Activated T-helper 1 cell treated with anti-CD3 and anti-CD28 coated beads, Interleukin-12 subunit alpha, Interleukin-12 subunit beta, Interleukin-2, Interleukin-4 antibody, amounts not matched to agents 30 ng/mL and 10 ng/mL and 1 ng/mL, durations not matched to agents 14 hours and 24 hours and 36 hours (primary cell): ENCODE measurements at regions of chrX and their contacts with region 1.

Region 1: GRCh38 chrX:1391707-1392375 is at the start of gene SLC25A6:
- DNase-seq: peak; percentile 100
- H3K4me3 Mint-ChIP-seq: peak within 1 kb of the TSS; percentile 93
- H3K27ac Mint-ChIP-seq: peak within 1 kb of the TSS; percentile 95
- H3K4me1 Mint-ChIP-seq: peaks cover 45% of the 10 kb centered on the region
- H3K27me3 Mint-ChIP-seq: no peaks in the 10 kb centered on the region
- total RNA-seq, gene SLC25A6: 281 and 289 TPM in 2 replicates

Region 2: GRCh38 chrX:386768-387575 is 1004.9 kb before region 1 on chrX and contains the start of gene PPP2R3B:
- intact Hi-C with region 1: loop called (anchors 10 kb)
- DNase-seq: peak; percentile 98
- H3K4me3 Mint-ChIP-seq: peak within 1 kb of the TSS; percentile 89
- H3K27ac Mint-ChIP-seq: peak within 1 kb of the TSS; percentile 99
- H3K4me1 Mint-ChIP-seq: peaks cover 9% of the 10 kb centered on the region
- H3K27me3 Mint-ChIP-seq: peaks cover 5% of the 10 kb centered on the region
- total RNA-seq, gene PPP2R3B: 43.2 and 44.1 TPM in 2 replicates

Region 3: DNA sequence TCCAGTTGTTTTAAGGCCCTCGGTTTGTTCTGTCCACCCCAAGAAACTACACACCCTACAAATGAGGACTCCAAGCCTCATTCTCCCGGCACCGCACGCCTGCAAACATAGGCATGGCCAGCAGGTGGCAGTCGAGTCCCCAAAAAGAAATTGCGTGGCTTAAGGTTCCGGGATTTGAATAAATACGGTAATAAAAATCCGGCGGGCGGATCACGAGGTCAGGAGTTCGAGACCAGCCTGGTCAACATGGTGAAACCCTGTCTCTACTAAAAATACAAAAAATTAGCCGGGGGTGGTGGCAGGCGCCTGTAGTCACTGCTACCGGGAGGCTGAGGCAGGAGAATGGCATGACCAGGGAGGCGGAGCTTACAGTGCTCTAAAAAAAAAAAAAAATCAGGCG is 145.0 kb before region 1 on chrX:
- intact Hi-C with region 1: loop called (anchors 2 kb)
- DNase-seq: peak; percentile 77
- H3K4me3 Mint-ChIP-seq: peak overlapping the region; percentile 64
- H3K27ac Mint-ChIP-seq: peak overlapping the region; percentile 78
- H3K4me1 Mint-ChIP-seq: peaks cover 42% of the 10 kb centered on the region
- H3K27me3 Mint-ChIP-seq: peaks cover 4% of the 10 kb centered on the region

Region 4: DNA sequence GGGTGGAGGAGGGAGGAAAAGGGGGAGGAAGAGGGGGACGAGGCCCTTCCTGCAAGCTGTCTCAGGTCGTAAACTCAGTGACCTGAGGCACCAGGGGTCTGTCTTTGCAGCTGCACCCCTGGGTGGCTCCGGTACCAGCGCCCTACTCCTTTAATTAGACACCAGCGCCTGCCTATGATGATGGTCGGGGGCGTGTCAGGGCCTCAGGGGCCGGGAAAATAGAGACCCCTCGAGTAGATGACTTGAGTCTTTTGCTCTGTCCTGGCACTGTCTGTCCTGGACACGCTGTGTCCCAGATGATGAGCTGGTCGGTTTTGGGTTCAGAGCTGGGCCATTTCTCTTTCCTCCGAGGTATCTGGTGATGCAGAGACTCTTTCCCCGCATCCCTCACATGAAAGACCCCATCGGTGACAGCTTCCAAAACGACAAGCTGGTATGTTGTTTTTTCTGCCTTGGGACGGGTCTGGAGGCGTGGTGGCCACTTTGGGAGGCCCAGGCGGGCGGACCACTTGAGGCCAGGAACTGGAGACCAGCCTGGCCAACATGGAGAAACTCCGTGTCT is 11.1 kb before region 1 on chrX:
- intact Hi-C with region 1: no loop called
- DNase-seq: no peak
- H3K4me3 Mint-ChIP-seq: no peak overlapping the region
- H3K27ac Mint-ChIP-seq: no peak overlapping the region
- H3K4me1 Mint-ChIP-seq: no peaks in the 10 kb centered on the region
- H3K27me3 Mint-ChIP-seq: peaks cover 1% of the 10 kb centered on the region

Region 5: DNA sequence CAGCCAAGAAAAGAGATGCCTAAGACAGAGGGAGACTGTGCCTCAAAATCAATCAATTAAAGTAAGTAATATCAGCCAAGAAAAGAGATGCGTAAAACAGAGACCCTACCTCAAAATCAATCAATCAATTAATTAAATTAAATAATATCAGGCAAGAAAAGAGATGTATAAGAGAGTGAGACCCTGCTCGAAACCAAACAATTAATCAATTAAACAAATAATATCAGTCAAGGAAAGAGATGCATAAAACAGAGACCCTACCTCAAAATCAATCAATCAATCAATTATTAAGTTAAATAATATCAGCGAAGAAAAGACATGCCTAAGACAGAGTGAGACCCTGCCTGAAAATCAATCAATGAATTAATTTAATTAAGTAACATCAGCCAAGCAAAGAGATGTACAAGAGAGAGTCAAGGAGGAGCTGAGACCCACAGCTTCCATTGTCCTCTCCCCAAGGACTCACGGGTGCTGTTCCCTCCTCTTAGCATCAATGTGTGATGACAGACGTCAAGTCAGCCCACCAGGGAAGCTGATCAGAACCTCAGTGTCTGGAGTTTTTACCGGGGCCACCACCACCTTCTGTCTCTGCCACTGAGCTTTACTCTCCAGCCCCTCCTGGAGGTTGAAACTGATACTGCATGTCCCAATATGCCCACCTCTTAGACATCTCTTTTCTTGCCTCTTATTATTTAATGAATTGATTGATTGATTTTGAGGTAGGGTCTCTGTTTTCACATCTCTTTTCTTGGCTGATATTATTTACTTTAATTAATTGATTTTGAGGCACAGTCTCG is 189.1 kb after region 1 on chrX:
- intact Hi-C with region 1: loop called (anchors 1 kb)
- DNase-seq: peak; percentile 66
- H3K4me3 Mint-ChIP-seq: no peak overlapping the region
- H3K27ac Mint-ChIP-seq: no peak overlapping the region
- H3K4me1 Mint-ChIP-seq: peaks cover 19% of the 10 kb centered on the region
- H3K27me3 Mint-ChIP-seq: no peaks in the 10 kb centered on the region

Region 6: DNA sequence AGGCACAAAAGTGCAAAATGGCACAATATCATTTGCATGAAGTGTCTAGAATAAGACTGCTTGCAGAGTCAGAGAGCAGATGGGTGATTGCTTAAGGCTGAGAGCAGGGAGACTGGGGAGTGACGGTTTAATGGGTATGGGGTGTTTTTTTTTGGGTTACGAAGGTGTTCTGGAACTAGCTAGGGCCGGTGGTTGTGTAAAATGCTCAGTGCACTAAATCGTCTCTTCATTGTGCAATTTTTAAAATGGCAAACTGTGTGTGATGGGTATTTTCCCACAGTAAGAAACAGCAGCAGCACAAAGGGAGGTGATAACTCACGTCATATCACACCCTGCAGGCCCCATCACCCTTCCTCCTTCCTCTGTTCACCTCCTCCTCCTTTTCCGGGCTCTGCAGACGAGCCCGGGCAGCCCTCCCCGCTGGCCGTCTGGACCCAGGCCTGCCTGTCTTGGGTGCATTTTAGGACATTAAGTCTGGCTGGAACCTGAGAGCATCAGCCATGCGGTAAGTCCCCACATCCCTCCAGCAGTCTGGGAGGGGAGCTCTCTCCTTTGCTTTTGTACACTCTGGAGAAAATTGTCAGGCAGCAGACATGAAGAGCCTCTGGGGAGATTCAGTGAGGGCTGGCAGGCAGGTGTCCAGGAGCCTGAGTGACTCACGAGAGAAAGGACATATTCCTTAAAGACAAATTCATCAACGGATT is 265.7 kb after region 1 on chrX:
- intact Hi-C with region 1: loop called (anchors 1 kb)
- DNase-seq: peak; percentile 51
- H3K4me3 Mint-ChIP-seq: peak overlapping the region; percentile 98
- H3K27ac Mint-ChIP-seq: peak overlapping the region; percentile 99
- H3K4me1 Mint-ChIP-seq: peaks cover 36% of the 10 kb centered on the region
- H3K27me3 Mint-ChIP-seq: no peaks in the 10 kb centered on the region

Region 7: DNA sequence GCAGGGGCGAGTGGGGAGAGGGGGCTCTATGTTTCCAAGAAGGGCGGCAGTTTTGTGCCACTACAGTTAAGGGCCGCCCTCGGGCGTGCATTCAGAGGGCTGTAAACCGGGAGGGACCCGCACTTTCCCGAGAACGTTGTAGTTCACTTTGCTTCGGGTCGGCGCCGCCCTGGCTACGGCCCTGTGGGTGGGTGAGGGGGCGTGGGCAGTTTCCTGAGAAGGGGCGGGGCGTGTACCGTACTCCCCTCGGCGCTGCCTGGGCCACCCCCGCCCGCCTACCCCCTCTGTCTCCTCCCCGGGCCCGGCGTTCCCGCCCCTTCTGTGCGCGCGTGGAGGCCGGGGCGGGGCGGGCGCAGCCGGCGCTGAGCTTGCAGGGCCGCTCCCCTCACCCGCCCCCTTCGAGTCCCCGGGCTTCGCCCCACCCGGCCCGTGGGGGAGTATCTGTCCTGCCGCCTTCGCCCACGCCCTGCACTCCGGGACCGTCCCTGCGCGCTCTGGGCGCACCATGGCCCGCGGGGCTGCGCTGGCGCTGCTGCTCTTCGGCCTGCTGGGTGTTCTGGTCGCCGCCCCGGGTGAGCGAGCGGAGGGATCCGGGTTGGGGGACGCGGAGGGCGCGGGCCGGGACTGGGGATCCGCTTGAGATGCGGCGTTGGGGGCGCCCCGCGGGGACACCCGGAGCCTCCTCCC is 1299.2 kb after region 1 on chrX and contains the start of gene CD99:
- intact Hi-C with region 1: loop called (anchors 2 kb)
- DNase-seq: peak; percentile 90
- H3K4me3 Mint-ChIP-seq: peak within 1 kb of the TSS; percentile 99
- H3K27ac Mint-ChIP-seq: peak within 1 kb of the TSS; percentile 99
- H3K4me1 Mint-ChIP-seq: peaks cover 31% of the 10 kb centered on the region
- H3K27me3 Mint-ChIP-seq: peaks cover 5% of the 10 kb centered on the region
- total RNA-seq, gene CD99: 421 and 437 TPM in 2 replicates